GM12878 (cell line): ENCODE measurements at regions of chr1 and their contacts with region 1.

Region 1: GRCh38 chr1:211752951-211753486 is 77.5 kb downstream of the LPGAT1 start:
- DNase-seq: no peak
- ATAC-seq: no peak; the same call in 2 of the 3 replicates
- H3K4me3 ChIP-seq: no peak overlapping the region
- H3K27ac ChIP-seq: no peak overlapping the region
- H3K4me1 ChIP-seq: peaks cover 3% of the 10 kb centered on the region; the same call in 1 of the 2 replicates
- H3K27me3 ChIP-seq: no peaks in the 10 kb centered on the region
- CTCF ChIP-seq: no peak
- EP300 ChIP-seq: no peak
- POLR2A ChIP-seq: no peak
- RAD21 ChIP-seq: no peak

Region 2: DNA sequence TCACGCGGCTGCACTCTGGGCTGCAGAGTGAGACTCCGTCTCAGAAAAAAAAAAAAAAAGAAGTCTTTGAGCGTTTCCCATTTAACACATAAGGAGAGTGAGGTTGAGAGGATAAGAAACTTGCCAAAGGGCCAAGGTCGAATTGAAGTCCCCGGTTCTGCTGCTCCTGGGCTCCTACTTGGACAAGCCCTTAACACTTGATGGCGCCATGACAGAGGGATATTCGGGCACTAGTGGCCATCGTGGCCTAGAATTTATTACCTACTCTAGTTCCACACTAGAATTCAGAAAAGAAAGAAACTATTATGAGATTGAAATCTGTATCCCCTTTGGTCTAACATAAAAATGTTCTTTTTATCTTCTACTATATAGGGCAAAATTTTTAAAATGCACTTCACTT is 11.9 kb before region 1 on chr1:
- CTCF ChIA-PET with region 1: interaction called, 11 read pairs
- POLR2A ChIA-PET with region 1: interaction called, 3 read pairs
- RAD21 ChIA-PET with region 1: interaction called, 3 read pairs
- SMC1A ChIA-PET with region 1: interaction called, 8 read pairs
- in situ Hi-C with region 1: no loop called
- intact Hi-C with region 1: no loop called
- DNase-seq: no peak
- ATAC-seq: no peak
- H3K4me3 ChIP-seq: no peak overlapping the region
- H3K27ac ChIP-seq: no peak overlapping the region
- H3K4me1 ChIP-seq: peaks cover 24% of the 10 kb centered on the region
- H3K27me3 ChIP-seq: no peaks in the 10 kb centered on the region
- CTCF ChIP-seq: no peak
- EP300 ChIP-seq: no peak
- POLR2A ChIP-seq: no peak
- RAD21 ChIP-seq: no peak